Lower leg skin (tissue), 4 donors: ENCODE measurements at regions of chr10 and their contacts with region 1.

Region 1: GRCh38 chr10:101214446-101215396 is 14.5 kb downstream of the LBX1 start:
- DNase-seq: no peak
- H3K4me3 ChIP-seq: no peak overlapping the region
- CTCF ChIP-seq: no peak
- POLR2A ChIP-seq: no peak

Region 2: GRCh38 chr10:101189541-101190401 is 24.9 kb before region 1 on chr10:
- intact Hi-C with region 1: no loop called
- DNase-seq: no peak
- H3K4me3 ChIP-seq: no peak overlapping the region
- CTCF ChIP-seq: no peak
- POLR2A ChIP-seq: no peak

Region 3: DNA sequence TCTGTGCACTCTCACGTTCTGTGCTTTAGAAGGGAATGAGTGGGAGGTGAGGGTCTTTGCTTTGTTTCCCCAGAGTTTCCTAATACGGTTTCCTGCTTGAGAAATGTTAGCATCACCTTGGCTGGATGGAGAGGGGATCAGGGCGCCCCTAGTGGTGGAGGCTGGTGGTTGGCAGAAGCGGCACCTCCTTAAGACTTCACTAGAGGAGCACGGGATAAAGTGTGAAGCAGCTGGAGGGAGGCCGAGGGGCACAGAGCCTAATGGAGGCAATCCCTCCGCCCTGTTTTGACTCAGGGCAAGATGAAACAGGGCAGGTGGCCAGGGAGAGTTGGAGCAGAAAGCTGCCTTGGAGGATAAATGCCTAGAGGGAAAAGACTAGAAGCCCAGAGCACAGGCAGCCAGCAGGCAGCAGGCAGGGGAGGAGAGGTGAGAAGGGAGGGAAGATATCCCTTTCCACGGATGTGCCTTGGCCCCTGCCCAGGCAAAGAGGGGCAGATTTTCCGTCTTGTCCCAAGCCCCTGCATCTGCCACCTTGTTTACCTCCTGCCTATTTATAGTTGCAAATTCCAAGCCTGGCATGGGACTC is 83.3 kb after region 1 on chr10:
- intact Hi-C with region 1: loop called (anchors 10 kb)
- DNase-seq: peak; percentile 35 to 92
- H3K4me3 ChIP-seq: no peak overlapping the region
- CTCF ChIP-seq: no peak
- POLR2A ChIP-seq: no peak

Region 4: GRCh38 chr10:101414034-101414433 is 199.3 kb after region 1 on chr10:
- intact Hi-C with region 1: no loop called
- DNase-seq: no peak
- H3K4me3 ChIP-seq: no peak overlapping the region
- CTCF ChIP-seq: no peak
- POLR2A ChIP-seq: no peak

Region 5: GRCh38 chr10:101570767-101571572 is 356.2 kb after region 1 on chr10:
- intact Hi-C with region 1: loop called (anchors 1 kb)
- DNase-seq: no peak
- H3K4me3 ChIP-seq: no peak overlapping the region
- CTCF ChIP-seq: no peak
- POLR2A ChIP-seq: no peak